Sciatic nerve (tissue), 2 donors: ENCODE measurements at regions of chr4 and their contacts with region 1.

Region 1: GRCh38 chr4:109298279-109299010 is 4.0 kb downstream of the COL25A1 start:
- DNase-seq: no peak
- ATAC-seq: no peak

Region 2: GRCh38 chr4:109094056-109094455 is 204.4 kb before region 1 on chr4:
- intact Hi-C with region 1: no loop called
- DNase-seq: no peak
- ATAC-seq: peak; percentile 51

Region 3: GRCh38 chr4:109323348-109323747 is 24.9 kb after region 1 on chr4:
- intact Hi-C with region 1: loop called (anchors 2 kb)
- DNase-seq: no peak
- ATAC-seq: no peak